IMR-90 (cell line): ENCODE measurements at regions of chr10 and their contacts with region 1.

Region 1: DNA sequence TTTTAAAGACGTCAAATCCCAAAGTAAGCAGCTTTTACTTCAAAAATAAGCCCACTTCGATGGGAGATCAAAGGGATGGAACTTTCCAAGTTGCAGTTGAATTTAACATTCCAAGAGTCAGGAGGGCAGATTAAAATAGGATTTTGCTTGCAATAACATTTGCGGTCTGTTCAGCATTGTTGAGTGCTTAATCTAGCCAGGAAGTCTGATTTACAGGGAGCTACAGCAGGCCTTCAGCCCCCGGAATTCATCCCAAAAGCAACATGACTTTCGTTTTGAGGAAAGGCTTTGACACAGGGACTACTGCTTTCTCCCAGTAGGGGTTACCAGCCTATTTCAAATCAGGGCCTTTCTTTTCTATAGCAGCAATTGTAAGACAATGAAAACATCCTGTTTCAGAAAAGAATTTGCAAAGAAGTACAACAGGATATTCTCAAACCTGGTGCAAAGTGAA is 279.6 kb upstream of the PITRM1 start:
- DNase-seq: peak; percentile 97
- ATAC-seq: peak; percentile 92
- H3K4me3 ChIP-seq: peak overlapping the region; percentile 17; the same call in 1 of the 2 replicates
- H3K27ac ChIP-seq: peak overlapping the region; percentile 95; the same call in 1 of the 2 replicates
- H3K4me1 ChIP-seq: peaks cover 13% of the 10 kb centered on the region
- H3K27me3 ChIP-seq: no peaks in the 10 kb centered on the region
- CTCF ChIP-seq: peak; percentile 68
- POLR2A ChIP-seq: 0 out of 2 replicates have a peak, but pooled peaks have one; percentile 37
- RAD21 ChIP-seq: peak; percentile 75

Region 2: DNA sequence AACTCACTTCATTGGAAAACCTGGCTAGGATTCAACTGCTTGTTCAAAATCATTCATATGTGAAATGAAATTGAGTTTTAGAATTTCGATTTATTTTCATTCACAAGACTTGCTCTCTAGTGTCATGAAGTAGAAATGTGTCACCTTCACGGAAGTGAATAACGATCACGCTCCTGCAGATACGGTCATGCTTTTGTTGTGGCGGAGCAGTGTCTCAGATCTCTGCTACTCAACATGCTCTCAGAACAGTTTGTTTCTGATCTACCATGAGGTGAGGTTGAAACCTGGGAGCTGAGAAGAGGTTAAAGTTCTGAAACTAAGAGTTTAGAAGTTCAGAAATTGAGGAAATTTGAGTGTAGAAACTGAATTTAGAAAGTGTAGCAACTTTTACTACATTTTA is 265.8 kb before region 1 on chr10:
- CTCF ChIA-PET with region 1: no interaction called
- POLR2A ChIA-PET with region 1: no interaction called
- dilution Hi-C with region 1: no loop called
- in situ Hi-C with region 1: no loop called
- intact Hi-C with region 1: no loop called
- DNase-seq: no peak
- ATAC-seq: no peak
- H3K4me3 ChIP-seq: no peak overlapping the region
- H3K27ac ChIP-seq: no peak overlapping the region
- H3K4me1 ChIP-seq: no peaks in the 10 kb centered on the region
- H3K27me3 ChIP-seq: peaks cover 16% of the 10 kb centered on the region
- CTCF ChIP-seq: no peak
- POLR2A ChIP-seq: no peak
- RAD21 ChIP-seq: no peak

Region 3: GRCh38 chr10:3197348-3198003 is 254.7 kb before region 1 on chr10:
- CTCF ChIA-PET with region 1: no interaction called
- POLR2A ChIA-PET with region 1: no interaction called
- dilution Hi-C with region 1: no loop called
- in situ Hi-C with region 1: no loop called
- intact Hi-C with region 1: loop called (anchors 5 kb)
- DNase-seq: peak; percentile 84
- ATAC-seq: peak; percentile 91
- H3K4me3 ChIP-seq: peak overlapping the region; percentile 37
- H3K27ac ChIP-seq: peak overlapping the region; percentile 12
- H3K4me1 ChIP-seq: peaks cover 10% of the 10 kb centered on the region
- H3K27me3 ChIP-seq: peaks cover 9% of the 10 kb centered on the region
- CTCF ChIP-seq: peak; percentile 95
- POLR2A ChIP-seq: peak; percentile 66
- RAD21 ChIP-seq: peak; percentile 98

Region 4: DNA sequence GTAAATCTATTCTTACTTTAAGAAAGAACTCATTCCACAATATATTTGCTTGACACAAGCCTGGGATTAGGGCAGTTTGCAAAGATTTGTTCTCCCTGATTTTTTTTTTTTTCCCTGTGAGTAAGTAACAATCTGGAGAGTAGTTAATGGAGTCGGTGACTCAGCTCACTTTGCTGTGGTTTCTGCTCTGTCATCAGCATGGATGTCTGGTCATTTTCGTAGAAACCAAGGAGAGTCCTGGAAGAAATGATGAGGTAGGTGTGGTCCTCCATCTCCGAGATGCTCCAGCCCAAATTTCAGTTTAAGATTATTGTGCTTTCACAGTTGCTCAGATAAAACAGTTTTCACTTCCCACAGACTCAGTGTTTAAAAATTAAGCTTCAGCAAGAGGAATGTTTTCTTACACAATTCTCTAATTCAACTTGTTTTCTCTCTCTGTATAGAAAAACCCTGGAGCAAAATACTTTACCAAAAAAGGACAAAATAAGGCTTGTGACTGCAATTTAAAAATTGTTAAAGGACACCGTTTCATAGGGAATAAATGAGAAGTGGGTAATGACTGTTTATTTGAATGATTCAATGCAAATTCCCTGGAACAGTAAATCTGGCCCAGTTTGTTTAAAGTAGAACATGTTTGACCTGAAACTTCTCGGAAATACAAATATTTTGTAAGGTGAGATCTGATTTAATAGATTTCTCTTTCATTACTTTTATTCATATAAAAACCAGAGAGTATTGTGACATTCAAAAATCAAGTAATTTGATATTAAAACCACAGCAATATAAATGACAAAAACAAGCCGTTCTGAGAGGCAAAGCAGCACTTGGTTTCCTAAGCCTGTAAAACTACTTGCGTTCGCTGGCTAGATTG is 203.1 kb before region 1 on chr10:
- CTCF ChIA-PET with region 1: no interaction called
- POLR2A ChIA-PET with region 1: no interaction called
- dilution Hi-C with region 1: no loop called
- in situ Hi-C with region 1: no loop called
- intact Hi-C with region 1: loop called (anchors 2 kb)
- DNase-seq: peak; percentile 94
- ATAC-seq: peak; percentile 95
- H3K4me3 ChIP-seq: peak overlapping the region; percentile 11; the same call in 1 of the 2 replicates
- H3K27ac ChIP-seq: peak overlapping the region; percentile 89
- H3K4me1 ChIP-seq: peaks cover 4% of the 10 kb centered on the region
- H3K27me3 ChIP-seq: no peaks in the 10 kb centered on the region
- CTCF ChIP-seq: no peak
- POLR2A ChIP-seq: no peak
- RAD21 ChIP-seq: no peak; the same call in 1 of the 2 replicates

Region 5: DNA sequence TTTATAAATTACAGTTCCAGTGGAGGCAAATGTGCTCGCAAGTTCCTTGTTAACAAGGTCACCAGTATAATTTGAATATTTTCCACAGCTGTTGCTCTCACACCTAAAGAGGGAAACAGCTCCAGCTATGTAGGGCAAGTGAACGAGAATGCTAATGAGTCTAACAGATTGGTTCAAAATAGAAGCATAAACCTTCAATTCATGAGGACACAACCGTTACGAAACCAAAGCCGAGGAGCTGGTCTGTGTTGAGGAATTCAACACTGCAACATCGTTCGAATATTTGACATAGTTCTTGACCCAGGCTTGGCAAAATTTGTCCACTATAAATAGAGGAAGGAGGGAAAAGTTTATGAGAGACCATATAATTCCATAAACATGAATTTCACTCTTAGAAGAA is 171.5 kb after region 1 on chr10:
- CTCF ChIA-PET with region 1: no interaction called
- POLR2A ChIA-PET with region 1: no interaction called
- dilution Hi-C with region 1: no loop called
- in situ Hi-C with region 1: no loop called
- intact Hi-C with region 1: loop called (anchors 5 kb)
- DNase-seq: peak; percentile 87
- ATAC-seq: peak; percentile 78
- H3K4me3 ChIP-seq: no peak overlapping the region
- H3K27ac ChIP-seq: peak overlapping the region; percentile 15; the same call in 1 of the 2 replicates
- H3K4me1 ChIP-seq: peaks cover 11% of the 10 kb centered on the region
- H3K27me3 ChIP-seq: no peaks in the 10 kb centered on the region
- CTCF ChIP-seq: no peak
- POLR2A ChIP-seq: no peak
- RAD21 ChIP-seq: no peak

Region 6: DNA sequence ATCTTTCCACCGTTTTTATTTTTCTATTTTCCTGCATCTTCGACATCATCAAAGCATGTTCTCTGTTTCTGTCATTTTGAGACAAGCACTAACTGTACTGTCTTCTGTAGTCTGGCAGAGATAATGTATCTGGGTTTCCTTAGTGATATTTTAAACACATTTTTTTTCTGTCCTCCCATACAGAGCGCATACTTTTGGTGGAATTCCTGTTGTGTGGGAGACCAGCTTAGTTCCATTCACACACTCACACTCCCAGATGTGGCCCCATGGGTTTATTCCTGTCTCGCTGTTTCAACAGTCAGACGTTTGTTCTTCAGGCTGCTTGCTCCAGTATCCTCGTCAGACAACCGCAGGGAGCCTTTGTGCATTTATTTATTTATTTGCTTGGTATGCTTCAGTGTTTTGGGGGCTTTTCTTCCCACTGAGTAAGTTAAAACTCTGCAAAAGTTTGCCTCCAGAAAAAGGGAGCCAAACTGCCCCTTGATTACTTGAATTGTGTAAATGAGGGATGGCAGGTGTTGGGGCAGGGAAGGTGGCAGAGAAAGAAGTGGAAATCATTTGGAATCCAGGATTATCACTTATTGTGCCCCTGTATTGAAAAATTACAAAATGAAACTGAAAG is 789.6 kb after region 1 on chr10:
- CTCF ChIA-PET with region 1: no interaction called
- POLR2A ChIA-PET with region 1: no interaction called
- dilution Hi-C with region 1: no loop called
- in situ Hi-C with region 1: no loop called
- intact Hi-C with region 1: loop called (anchors 5 kb)
- DNase-seq: peak; percentile 100
- ATAC-seq: peak; percentile 82
- H3K4me3 ChIP-seq: peak overlapping the region; percentile 4; the same call in 1 of the 2 replicates
- H3K27ac ChIP-seq: peak overlapping the region; percentile 68
- H3K4me1 ChIP-seq: peaks cover 11% of the 10 kb centered on the region
- H3K27me3 ChIP-seq: no peaks in the 10 kb centered on the region
- CTCF ChIP-seq: no peak
- POLR2A ChIP-seq: peak; percentile 73; the same call in 1 of the 2 replicates
- RAD21 ChIP-seq: peak; percentile 20; the same call in 1 of the 2 replicates